CD4-positive, alpha-beta T cell (primary cell): ENCODE measurements at regions of chr16 and their contacts with region 1.

Region 1: DNA sequence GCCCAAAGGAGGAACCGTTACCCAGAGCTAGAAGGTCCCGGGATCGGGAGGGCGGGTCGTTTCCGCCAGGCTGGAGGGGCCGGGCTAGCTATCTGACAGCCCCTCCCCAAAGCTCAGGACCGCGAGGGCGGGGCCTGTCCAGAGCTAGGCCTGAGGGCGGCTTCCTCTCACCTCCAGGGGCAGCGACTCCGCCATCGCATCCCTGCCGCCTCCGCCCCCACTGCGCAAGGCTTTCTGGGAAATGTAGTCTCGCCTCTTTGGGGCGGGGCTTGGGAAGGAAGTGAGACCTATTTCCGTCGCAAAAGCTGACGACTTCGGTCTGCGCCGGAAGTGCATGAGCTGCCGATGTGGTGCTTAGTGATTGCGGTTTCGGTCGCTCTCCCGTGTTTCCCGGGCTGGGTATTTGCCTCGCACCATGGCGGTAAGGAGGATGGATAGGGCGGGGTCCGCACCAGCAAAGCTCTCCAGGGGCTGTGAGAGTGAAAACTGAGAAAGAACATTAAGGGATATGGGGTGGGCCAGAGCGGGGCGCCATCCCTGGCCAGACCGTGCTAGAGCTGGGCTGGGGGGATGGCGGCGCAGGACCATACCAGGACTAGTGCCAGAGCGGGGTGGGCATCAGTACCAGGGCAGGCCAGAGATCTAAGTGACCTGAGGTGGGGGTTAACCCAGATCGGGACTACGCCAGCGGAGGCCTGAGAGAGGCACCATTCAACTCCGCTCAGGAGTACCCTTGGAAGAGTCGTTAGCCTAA is at the start of gene TMEM208:
- DNase-seq: peak; percentile 94 to 99 (median 97)
- ATAC-seq: peak; percentile 94
- H3K4me3 ChIP-seq: peak within 1 kb of the TSS; percentile 97
- H3K4me3 Mint-ChIP-seq: peak within 1 kb of the TSS; percentile 99
- H3K27ac ChIP-seq: peak within 1 kb of the TSS; percentile 86 to 88
- H3K27ac Mint-ChIP-seq: peak within 1 kb of the TSS; percentile 92
- H3K4me1 ChIP-seq: peaks cover 55% of the 10 kb centered on the region
- H3K4me1 Mint-ChIP-seq: peaks cover 54% of the 10 kb centered on the region
- H3K27me3 ChIP-seq: no peaks in the 10 kb centered on the region
- H3K27me3 Mint-ChIP-seq: no peaks in the 10 kb centered on the region
- CTCF ChIP-seq: no peak
- total RNA-seq, gene TMEM208: 35.8 to 37.6 TPM

Region 2: GRCh38 chr16:67028555-67029248 is 198.3 kb before region 1 on chr16 and contains the start of gene CBFB:
- CTCF ChIA-PET with region 1: no interaction called
- POLR2A ChIA-PET with region 1: no interaction called
- intact Hi-C with region 1: loop called in 1 of 2 experiments (anchors 2 kb)
- DNase-seq: peak; percentile 87 to 98 (median 95)
- ATAC-seq: peak; percentile 85
- H3K4me3 ChIP-seq: peak within 1 kb of the TSS; percentile 64
- H3K4me3 Mint-ChIP-seq: peak within 1 kb of the TSS; percentile 92
- H3K27ac ChIP-seq: peak within 1 kb of the TSS; percentile 81 to 93
- H3K27ac Mint-ChIP-seq: peak within 1 kb of the TSS; percentile 95
- H3K4me1 ChIP-seq: peaks cover 48% of the 10 kb centered on the region
- H3K4me1 Mint-ChIP-seq: peaks cover 40% of the 10 kb centered on the region
- H3K27me3 ChIP-seq: no peaks in the 10 kb centered on the region
- H3K27me3 Mint-ChIP-seq: no peaks in the 10 kb centered on the region
- CTCF ChIP-seq: peak; percentile 16
- total RNA-seq, gene CBFB: 58.8 to 59.6 TPM

Region 3: DNA sequence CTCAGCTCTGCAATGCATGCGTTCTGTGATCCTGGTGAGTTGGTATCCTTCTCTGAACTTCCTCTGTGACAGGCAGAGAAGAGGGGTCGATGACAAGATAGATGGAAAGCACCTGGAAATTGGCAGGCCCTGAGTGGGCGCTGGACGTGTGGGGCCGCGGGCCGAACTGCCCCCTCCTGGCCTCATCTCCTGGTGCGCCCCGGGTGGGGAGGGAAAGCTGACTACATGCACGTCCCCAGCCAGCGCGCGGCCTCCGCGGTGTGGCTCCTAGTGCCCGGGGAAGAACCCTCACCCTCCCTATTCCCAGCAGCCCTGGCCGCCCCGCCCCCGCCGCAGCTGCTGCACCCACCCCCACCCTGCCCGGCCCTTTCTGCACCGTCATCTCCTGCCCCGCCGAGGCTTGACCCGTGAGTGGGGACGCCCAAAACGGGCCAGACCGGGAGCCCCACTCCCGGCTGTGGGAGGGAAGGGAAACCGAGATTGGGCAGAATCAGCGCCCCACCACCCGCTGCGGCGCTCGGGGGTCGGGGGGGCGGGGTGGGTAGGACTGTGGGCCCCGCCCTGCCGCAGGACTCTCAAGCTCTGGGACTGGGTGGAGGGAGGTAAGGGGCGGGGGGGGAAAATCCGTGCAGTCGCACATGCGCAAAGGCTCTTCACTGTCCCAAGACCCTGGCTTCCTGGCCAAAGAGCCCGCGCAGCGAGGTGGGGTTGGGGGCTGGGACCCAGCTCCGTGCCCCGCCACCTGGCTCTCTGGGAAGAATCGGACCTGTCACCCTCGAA is 56.6 kb before region 1 on chr16 and contains the start of gene NOL3:
- CTCF ChIA-PET with region 1: no interaction called
- POLR2A ChIA-PET with region 1: no interaction called
- intact Hi-C with region 1: no loop called
- DNase-seq: peak in 4 of 14 experiments; percentile 29 to 59 (median 46)
- ATAC-seq: no peak
- H3K4me3 ChIP-seq: peak within 1 kb of the TSS; percentile 19
- H3K4me3 Mint-ChIP-seq: peak within 1 kb of the TSS; percentile 62
- H3K27ac ChIP-seq: no peak within 1 kb of the TSS
- H3K27ac Mint-ChIP-seq: no peak within 1 kb of the TSS
- H3K4me1 ChIP-seq: peaks cover 51% of the 10 kb centered on the region
- H3K4me1 Mint-ChIP-seq: peaks cover 40% of the 10 kb centered on the region
- H3K27me3 ChIP-seq: peaks cover 66 to 69% of the 10 kb centered on the region in 2 experiments
- H3K27me3 Mint-ChIP-seq: peaks cover 85% of the 10 kb centered on the region
- CTCF ChIP-seq: no peak
- total RNA-seq, gene NOL3: 1.1 to 1.2 TPM

Region 4: GRCh38 chr16:67183627-67184328 is 43.2 kb before region 1 on chr16 and contains the start of gene MATCAP1:
- CTCF ChIA-PET with region 1: interaction called, 5 read pairs
- POLR2A ChIA-PET with region 1: interaction called, 15 read pairs
- intact Hi-C with region 1: no loop called
- DNase-seq: peak; percentile 83 to 98 (median 89)
- ATAC-seq: peak; percentile 94
- H3K4me3 ChIP-seq: peak within 1 kb of the TSS; percentile 86
- H3K4me3 Mint-ChIP-seq: peak within 1 kb of the TSS; percentile 94
- H3K27ac ChIP-seq: peak within 1 kb of the TSS; percentile 87 to 89
- H3K27ac Mint-ChIP-seq: peak within 1 kb of the TSS; percentile 90
- H3K4me1 ChIP-seq: peaks cover 27% of the 10 kb centered on the region
- H3K4me1 Mint-ChIP-seq: peaks cover 16% of the 10 kb centered on the region
- H3K27me3 ChIP-seq: peaks cover 0 to 6% of the 10 kb centered on the region in 2 experiments
- H3K27me3 Mint-ChIP-seq: peaks cover 4% of the 10 kb centered on the region
- CTCF ChIP-seq: no peak
- total RNA-seq, gene MATCAP1: 9.7 to 10.6 TPM

Region 5: DNA sequence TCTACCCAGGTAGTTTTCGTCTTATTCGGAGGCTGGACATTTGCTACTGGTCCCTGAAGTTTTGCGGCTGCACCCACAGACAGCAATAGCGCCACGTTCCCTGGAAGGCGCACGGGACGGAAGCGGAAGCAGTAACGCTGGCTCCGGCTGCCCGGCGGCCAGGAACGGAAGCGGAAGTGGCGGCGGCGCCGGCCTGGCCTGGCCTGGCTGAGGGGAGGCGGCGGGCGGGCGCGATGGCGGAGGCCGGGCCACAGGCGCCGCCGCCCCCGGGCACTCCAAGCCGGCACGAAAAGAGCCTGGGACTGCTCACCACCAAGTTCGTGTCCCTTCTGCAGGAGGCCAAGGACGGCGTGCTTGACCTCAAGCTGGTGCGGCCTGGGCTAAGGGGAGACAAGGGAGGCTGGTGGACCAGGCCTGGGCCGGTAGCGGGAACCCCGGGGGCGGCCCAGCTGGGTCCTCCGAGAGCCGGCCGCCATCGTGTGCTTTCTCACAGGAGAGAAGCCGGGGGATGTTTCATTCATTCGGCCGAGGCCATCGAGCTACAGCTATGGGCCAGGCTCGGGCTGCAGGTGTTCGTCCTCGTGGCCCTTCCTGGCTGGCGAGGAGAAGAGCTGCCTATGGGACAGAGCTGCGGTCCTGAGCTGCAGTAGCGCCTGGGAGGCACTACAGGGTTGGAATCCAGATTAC is 34.8 kb before region 1 on chr16 and contains the start of gene E2F4:
- CTCF ChIA-PET with region 1: no interaction called
- POLR2A ChIA-PET with region 1: interaction called, 9 read pairs
- intact Hi-C with region 1: loop called (anchors 1 to 2 kb)
- DNase-seq: peak; percentile 72 to 93 (median 82)
- ATAC-seq: peak; percentile 88
- H3K4me3 ChIP-seq: peak within 1 kb of the TSS; percentile 95
- H3K4me3 Mint-ChIP-seq: peak within 1 kb of the TSS; percentile 92
- H3K27ac ChIP-seq: peak within 1 kb of the TSS; percentile 69 to 86
- H3K27ac Mint-ChIP-seq: peak within 1 kb of the TSS; percentile 87
- H3K4me1 ChIP-seq: peaks cover 51% of the 10 kb centered on the region
- H3K4me1 Mint-ChIP-seq: peaks cover 43% of the 10 kb centered on the region
- H3K27me3 ChIP-seq: no peaks in the 10 kb centered on the region
- H3K27me3 Mint-ChIP-seq: no peaks in the 10 kb centered on the region
- CTCF ChIP-seq: no peak
- total RNA-seq, gene E2F4: 50.9 to 56.1 TPM

Region 6: DNA sequence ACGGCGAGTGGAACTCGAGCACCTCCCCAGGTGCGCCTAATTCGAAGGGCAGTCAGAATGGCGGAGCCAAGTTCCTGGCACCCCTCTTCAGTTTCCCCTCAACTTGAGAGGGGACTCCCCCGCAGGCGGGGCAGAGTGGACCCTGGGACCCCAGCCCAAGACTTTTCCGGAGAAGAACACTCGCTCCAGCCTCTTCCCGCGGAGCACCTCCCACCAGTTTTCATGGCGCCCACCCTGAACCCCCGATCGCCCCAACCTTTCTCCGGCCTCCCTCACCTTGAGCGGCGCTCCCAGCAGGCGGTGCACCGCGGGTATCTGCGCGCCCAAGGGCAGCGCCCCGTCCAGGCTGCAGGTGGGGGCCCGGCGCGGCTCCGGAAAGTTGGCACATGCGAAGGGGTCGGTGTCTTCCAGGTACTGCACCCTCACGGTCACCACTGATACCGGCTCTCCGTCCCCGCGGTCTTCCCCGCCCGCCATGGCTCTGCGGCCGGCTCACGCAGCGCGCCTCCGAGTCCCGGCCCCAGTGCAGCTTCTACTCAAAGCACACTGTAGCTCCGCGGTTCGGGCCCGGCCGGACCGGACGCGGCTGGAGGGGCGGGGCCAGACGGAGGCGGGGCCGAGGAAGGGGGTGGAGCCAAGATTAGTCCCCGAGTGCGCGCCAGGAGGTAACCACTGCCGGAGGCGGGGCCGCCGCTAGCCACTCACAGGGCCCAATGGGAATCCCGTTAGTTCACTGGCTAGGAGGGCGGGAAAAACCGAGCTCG is 20.1 kb after region 1 on chr16 and contains the start of gene FHOD1:
- CTCF ChIA-PET with region 1: interaction called, 31 read pairs
- POLR2A ChIA-PET with region 1: interaction called, 81 read pairs
- intact Hi-C with region 1: loop called (anchors 1 kb)
- DNase-seq: peak; percentile 86 to 99 (median 96)
- ATAC-seq: peak; percentile 74
- H3K4me3 ChIP-seq: peak within 1 kb of the TSS; percentile 87
- H3K4me3 Mint-ChIP-seq: peak within 1 kb of the TSS; percentile 97
- H3K27ac ChIP-seq: peak within 1 kb of the TSS; percentile 65 to 74
- H3K27ac Mint-ChIP-seq: peak within 1 kb of the TSS; percentile 68
- H3K4me1 ChIP-seq: peaks cover 72% of the 10 kb centered on the region
- H3K4me1 Mint-ChIP-seq: peaks cover 42% of the 10 kb centered on the region
- H3K27me3 ChIP-seq: peaks cover 0 to 6% of the 10 kb centered on the region in 2 experiments
- H3K27me3 Mint-ChIP-seq: peaks cover 13% of the 10 kb centered on the region
- CTCF ChIP-seq: no peak
- total RNA-seq, gene FHOD1: 21.1 to 26.0 TPM

Region 7: DNA sequence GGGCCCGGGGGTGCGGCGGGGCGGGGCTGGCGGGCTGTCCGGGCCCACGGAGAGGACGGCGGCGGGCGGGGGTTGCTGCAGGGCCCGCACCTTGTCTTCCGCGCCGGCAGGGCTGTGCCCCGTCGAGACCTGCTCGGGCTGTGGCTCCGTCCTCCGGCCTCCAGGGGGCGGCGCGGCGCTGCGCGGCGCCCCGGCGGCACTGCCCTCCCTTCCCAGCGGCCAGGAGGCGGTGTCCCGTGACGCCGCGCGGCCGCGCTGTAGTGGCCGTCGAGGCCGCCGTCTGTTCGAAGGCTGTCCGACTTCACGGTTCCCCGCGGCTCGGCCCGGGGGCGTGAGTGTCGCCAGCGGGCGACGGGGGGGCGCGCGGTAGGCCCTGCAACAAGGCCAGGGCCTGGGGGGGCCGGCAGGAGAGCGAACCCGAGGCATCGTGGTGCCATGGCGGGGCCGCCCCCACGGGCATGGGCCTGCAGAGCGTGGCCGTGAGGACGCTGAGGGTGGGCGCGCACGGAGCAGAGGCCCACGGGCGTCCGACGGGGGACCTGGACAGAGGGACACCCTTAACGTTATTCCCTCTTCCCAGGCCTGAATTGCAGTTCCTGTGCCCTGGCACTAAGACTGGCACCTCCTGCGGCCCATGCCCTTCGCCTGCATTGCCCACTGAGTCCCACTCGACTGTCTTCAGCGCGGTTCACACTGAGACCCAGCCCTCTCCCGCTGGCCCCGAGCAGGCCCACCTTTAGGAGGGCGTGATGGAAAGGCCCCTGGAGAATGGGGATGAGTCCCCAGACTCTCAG is 52.5 kb after region 1 on chr16 and contains the start of gene PLEKHG4:
- CTCF ChIA-PET with region 1: interaction called, 4 read pairs
- POLR2A ChIA-PET with region 1: no interaction called
- intact Hi-C with region 1: loop called in 1 of 2 experiments (anchors 5 kb)
- DNase-seq: peak; percentile 65 to 92 (median 76)
- ATAC-seq: peak; percentile 97
- H3K4me3 ChIP-seq: peak within 1 kb of the TSS; percentile 74
- H3K4me3 Mint-ChIP-seq: peak within 1 kb of the TSS; percentile 88
- H3K27ac ChIP-seq: peak within 1 kb of the TSS in 1 of 2 donors; percentile 27
- H3K27ac Mint-ChIP-seq: peak within 1 kb of the TSS; percentile 64
- H3K4me1 ChIP-seq: peaks cover 27% of the 10 kb centered on the region
- H3K4me1 Mint-ChIP-seq: peaks cover 17% of the 10 kb centered on the region
- H3K27me3 ChIP-seq: no peaks in the 10 kb centered on the region
- H3K27me3 Mint-ChIP-seq: no peaks in the 10 kb centered on the region
- CTCF ChIP-seq: peak; percentile 55
- total RNA-seq, gene PLEKHG4: 13.1 to 14.0 TPM

Region 8: DNA sequence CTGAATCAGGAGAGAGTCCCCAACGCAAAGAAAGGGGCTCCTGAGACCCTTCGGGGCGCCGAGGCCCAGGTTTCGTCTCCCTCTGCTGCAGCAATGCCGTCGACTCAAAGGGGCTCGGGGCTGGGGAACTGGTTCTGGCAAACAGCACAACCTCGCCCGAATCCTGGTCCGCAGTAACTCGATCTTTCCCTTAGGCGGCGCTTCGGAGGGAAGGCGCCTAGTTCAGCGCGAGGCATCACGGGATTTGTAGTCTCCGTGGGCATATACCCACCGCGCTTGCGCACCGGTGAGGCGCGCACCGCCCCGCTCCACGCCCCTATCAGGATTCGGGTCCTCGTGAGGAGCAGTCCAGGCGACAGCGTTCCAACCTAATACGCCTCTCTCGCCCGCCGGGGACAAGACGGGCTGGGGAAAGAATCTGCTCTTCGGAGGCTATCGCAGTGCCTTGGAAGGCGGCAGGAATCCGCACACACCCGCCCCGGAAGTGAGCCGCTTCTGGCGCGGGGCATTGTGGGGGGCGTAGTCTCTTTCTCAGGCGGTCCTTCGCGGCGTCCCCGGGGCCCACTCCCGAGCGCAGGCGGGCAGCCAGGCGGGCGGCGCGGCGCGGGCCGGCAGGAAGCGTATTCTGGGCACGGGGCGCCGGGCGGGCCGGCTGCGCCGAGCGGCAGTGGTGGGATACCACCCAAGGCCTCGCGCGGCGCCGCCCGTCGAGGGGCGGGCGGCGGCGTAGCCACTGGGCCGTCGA is 615.0 kb after region 1 on chr16 and contains the start of gene THAP11:
- CTCF ChIA-PET with region 1: no interaction called
- POLR2A ChIA-PET with region 1: no interaction called
- intact Hi-C with region 1: loop called in 1 of 2 experiments (anchors 10 kb)
- DNase-seq: peak; percentile 90 to 97 (median 94)
- ATAC-seq: peak; percentile 55
- H3K4me3 ChIP-seq: peak within 1 kb of the TSS; percentile 96
- H3K4me3 Mint-ChIP-seq: peak within 1 kb of the TSS; percentile 98
- H3K27ac ChIP-seq: peak within 1 kb of the TSS; percentile 87 to 99
- H3K27ac Mint-ChIP-seq: peak within 1 kb of the TSS; percentile 95
- H3K4me1 ChIP-seq: peaks cover 50% of the 10 kb centered on the region
- H3K4me1 Mint-ChIP-seq: peaks cover 42% of the 10 kb centered on the region
- H3K27me3 ChIP-seq: no peaks in the 10 kb centered on the region
- H3K27me3 Mint-ChIP-seq: no peaks in the 10 kb centered on the region
- CTCF ChIP-seq: peak; percentile 85
- total RNA-seq, gene THAP11: 31.2 to 32.1 TPM